Activated naive CD8-positive, alpha-beta T cell treated with anti-CD3 and anti-CD28 coated beads, Interleukin-2, amount 10 ng/mL, durations not matched to agents 7 days and 5 days (primary cell): ENCODE measurements at regions of chr11 and their contacts with region 1.

Region 1: DNA sequence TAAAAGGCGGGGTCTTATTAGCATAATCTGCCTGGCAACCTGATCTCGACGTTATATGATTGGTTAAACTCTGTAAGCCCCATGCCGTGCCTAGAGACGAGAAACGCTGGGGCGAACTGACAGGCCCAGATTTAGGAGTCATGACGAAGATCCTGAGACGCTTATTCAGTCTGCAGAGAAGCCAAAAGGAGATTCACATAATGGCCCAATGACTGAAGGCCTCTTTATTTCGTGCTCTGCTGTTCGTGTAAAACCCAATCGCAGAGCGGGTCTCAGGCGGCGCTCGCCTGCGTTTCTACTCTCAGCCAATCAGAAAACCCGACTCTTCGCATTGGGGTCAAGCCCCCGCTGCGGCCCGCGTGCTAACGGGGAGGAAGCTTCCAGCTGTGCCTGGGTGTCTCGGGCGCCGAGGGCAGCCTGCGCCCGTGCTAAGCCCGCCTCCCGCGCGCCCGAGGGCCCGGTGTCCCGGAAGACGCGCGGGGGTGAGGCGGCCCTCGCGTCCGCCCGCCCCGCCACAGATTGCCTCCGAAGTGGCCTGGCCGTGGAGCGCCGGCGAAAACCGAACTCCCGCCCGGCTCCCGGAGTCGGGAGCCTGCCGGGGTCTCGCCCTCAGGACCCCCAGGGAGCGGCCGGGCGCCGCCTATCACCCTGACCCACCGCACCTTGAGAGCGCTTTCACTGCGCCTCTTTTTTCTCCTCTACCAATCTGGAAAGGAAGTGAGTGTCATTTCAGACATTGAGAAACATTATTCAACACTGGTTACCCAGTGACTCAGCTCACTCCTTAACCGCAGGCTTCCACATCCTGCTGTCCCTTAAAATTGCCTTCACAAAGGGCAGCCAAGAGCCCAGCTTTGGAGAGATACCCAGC is 446 bp upstream of the PRDM10 start:
- DNase-seq: peak; percentile 88
- ATAC-seq: peak; percentile 77
- H3K4me3 Mint-ChIP-seq: peak overlapping the region; percentile 99
- H3K27ac Mint-ChIP-seq: peak overlapping the region; percentile 100
- H3K4me1 Mint-ChIP-seq: peaks cover 20% of the 10 kb centered on the region
- H3K27me3 Mint-ChIP-seq: peaks cover 7% of the 10 kb centered on the region

Region 2: GRCh38 chr11:129992161-129992944 is 10.7 kb before region 1 on chr11:
- POLR2A ChIA-PET with region 1: interaction called, 10 read pairs
- DNase-seq: no peak
- ATAC-seq: peak; percentile 61
- H3K4me3 Mint-ChIP-seq: no peak overlapping the region
- H3K27ac Mint-ChIP-seq: no peak overlapping the region
- H3K4me1 Mint-ChIP-seq: peaks cover 3% of the 10 kb centered on the region
- H3K27me3 Mint-ChIP-seq: no peaks in the 10 kb centered on the region

Region 3: GRCh38 chr11:130069684-130070108 is 66.6 kb after region 1 on chr11 and contains the start of gene APLP2:
- POLR2A ChIA-PET with region 1: interaction called, 27 read pairs
- DNase-seq: peak; percentile 94
- ATAC-seq: peak; percentile 91
- H3K4me3 Mint-ChIP-seq: peak within 1 kb of the TSS; percentile 96
- H3K27ac Mint-ChIP-seq: peak within 1 kb of the TSS; percentile 84
- H3K4me1 Mint-ChIP-seq: peaks cover 17% of the 10 kb centered on the region
- H3K27me3 Mint-ChIP-seq: peaks cover 29% of the 10 kb centered on the region
- total RNA-seq, gene APLP2: 26.1 to 31.5 TPM